ENCODE measurements at regions of chr1 and their contacts with region 1.

Region 1: DNA sequence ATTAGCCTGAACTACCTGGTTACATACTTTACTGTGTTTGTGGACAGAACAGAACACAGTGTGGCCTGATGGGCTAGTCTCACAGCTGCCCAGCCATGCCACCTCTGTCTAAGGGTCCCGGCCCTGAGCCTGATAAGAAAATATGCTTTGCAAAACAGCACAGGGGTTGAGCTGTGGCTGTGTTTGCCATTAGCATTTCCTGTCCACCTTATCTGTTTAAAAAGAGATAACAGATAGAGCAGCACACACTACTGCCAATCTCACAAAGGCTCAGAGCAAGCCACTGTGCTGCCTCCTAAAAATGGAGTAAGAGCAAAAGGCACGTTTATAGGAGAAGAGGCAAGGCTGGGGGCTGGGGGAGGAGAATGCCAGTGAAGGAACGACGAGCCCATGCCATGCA is 95.0 kb downstream of the SUSD4 start:
- DNase-seq: no peak
- H3K4me3 ChIP-seq: no peak overlapping the region
- H3K27ac ChIP-seq: no peak overlapping the region
- H3K4me1 ChIP-seq: no peaks in the 10 kb centered on the region
- H3K27me3 ChIP-seq: no peaks in the 10 kb centered on the region
- CTCF ChIP-seq: no peak
- POLR2A ChIP-seq: no peak

Region 2: GRCh38 chr1:223226271-223226670 is 42.7 kb before region 1 on chr1:
- intact Hi-C with region 1: loop called (anchors 1 kb)
- DNase-seq: peak; percentile 67 to 82
- H3K4me3 ChIP-seq: no peak overlapping the region
- H3K27ac ChIP-seq: no peak overlapping the region
- H3K4me1 ChIP-seq: no peaks in the 10 kb centered on the region
- H3K27me3 ChIP-seq: no peaks in the 10 kb centered on the region
- CTCF ChIP-seq: no peak
- POLR2A ChIP-seq: no peak

Measured in vagina (tissue), 2 donors.